Activated CD4-positive, alpha-beta T cell treated with anti-CD3 and anti-CD28 coated beads for 36 hours (primary cell): ENCODE measurements at regions of chr2 and their contacts with region 1.

Region 1: DNA sequence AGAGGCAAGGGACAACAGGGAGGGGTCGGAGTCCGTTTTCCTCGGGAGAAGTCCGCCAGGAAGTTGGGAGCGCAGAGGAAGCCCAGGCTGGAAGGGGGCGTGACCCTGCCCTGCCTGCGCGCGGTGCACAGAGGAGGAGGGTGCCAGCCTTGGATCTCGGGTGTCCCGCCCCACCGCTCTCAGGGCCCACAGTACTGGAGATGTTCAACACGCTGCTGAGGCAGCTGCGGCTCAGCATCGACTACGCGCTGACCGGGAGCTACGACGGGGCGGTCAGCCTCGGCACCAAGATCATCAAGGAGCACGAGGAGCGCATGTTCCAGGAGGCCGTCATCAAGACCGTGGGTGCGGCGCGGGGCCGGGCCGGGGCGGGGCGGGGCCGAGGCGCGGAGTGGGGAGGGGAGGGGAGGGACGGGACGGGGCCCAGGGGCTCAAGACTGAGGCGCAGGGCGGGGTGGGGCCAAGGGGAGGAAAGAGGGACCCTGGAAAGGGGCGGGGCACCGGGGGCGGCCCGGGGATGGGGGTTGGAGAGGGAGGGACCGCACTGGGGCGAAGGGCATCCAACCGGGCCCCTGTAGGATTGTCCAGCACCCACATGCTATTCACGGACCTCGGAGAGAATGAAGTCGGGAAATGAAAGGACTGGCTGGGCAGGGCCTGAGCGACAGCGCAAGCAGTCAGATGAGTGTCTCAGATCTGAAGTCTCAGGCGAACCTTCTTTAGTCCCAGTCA is 36.6 kb downstream of the POMC start:
- DNase-seq: peak; percentile 39
- ATAC-seq: peak; percentile 47
- H3K4me3 Mint-ChIP-seq: peak overlapping the region; percentile 38
- H3K27ac Mint-ChIP-seq: no peak overlapping the region
- H3K4me1 Mint-ChIP-seq: peaks cover 11% of the 10 kb centered on the region
- H3K27me3 Mint-ChIP-seq: peaks cover 47% of the 10 kb centered on the region

Region 2: GRCh38 chr2:24977631-24978030 is 154.1 kb before region 1 on chr2:
- CTCF ChIA-PET with region 1: interaction called, 141 read pairs
- POLR2A ChIA-PET with region 1: interaction called, 12 read pairs
- intact Hi-C with region 1: loop called (anchors 1 kb)
- DNase-seq: no peak
- ATAC-seq: no peak
- H3K4me3 Mint-ChIP-seq: no peak overlapping the region
- H3K27ac Mint-ChIP-seq: no peak overlapping the region
- H3K4me1 Mint-ChIP-seq: peaks cover 19% of the 10 kb centered on the region
- H3K27me3 Mint-ChIP-seq: no peaks in the 10 kb centered on the region

Region 3: GRCh38 chr2:25104736-25105135 is 27.0 kb before region 1 on chr2:
- CTCF ChIA-PET with region 1: interaction called, 15 read pairs
- POLR2A ChIA-PET with region 1: no interaction called
- intact Hi-C with region 1: no loop called
- DNase-seq: no peak
- ATAC-seq: no peak
- H3K4me3 Mint-ChIP-seq: no peak overlapping the region
- H3K27ac Mint-ChIP-seq: no peak overlapping the region
- H3K4me1 Mint-ChIP-seq: peaks cover 29% of the 10 kb centered on the region
- H3K27me3 Mint-ChIP-seq: peaks cover 6% of the 10 kb centered on the region

Region 4: DNA sequence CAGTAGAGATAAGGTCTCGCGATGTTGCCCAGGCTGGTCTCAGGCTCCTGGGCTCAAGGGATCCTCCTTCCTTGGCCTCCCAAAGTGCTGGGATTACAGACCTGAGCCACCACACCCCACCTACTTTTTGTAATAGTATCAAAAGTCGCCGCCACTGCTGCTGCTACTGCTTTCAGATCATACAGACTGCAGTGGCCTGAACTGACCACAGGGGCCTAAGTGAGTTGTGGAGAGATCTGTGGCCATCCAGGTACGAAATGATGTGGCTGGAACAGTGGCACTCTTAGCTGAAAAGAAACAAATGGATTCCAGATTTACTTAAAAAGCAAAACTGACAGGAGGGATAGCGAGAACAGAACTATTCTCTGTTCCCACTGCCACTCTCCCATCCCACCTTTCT is 69.5 kb after region 1 on chr2:
- CTCF ChIA-PET with region 1: interaction called, 4 read pairs
- POLR2A ChIA-PET with region 1: no interaction called
- intact Hi-C with region 1: loop called in 1 of 2 experiments (anchors 2 kb)
- DNase-seq: no peak
- ATAC-seq: no peak
- H3K4me3 Mint-ChIP-seq: no peak overlapping the region
- H3K27ac Mint-ChIP-seq: no peak overlapping the region
- H3K4me1 Mint-ChIP-seq: peaks cover 9% of the 10 kb centered on the region
- H3K27me3 Mint-ChIP-seq: no peaks in the 10 kb centered on the region

Region 5: GRCh38 chr2:25497918-25498407 is 366.2 kb after region 1 on chr2:
- CTCF ChIA-PET with region 1: no interaction called
- POLR2A ChIA-PET with region 1: no interaction called
- intact Hi-C with region 1: no loop called
- DNase-seq: no peak
- ATAC-seq: no peak
- H3K4me3 Mint-ChIP-seq: no peak overlapping the region
- H3K27ac Mint-ChIP-seq: no peak overlapping the region
- H3K4me1 Mint-ChIP-seq: peaks cover 2% of the 10 kb centered on the region
- H3K27me3 Mint-ChIP-seq: no peaks in the 10 kb centered on the region